BJ (cell line): ENCODE measurements at regions of chr11 and their contacts with region 1.

Region 1: GRCh38 chr11:124673333-124674167 is at the starts of genes SIAE and SPA17:
- DNase-seq: peak; percentile 79
- H3K4me3 ChIP-seq: peak within 1 kb of the TSS; percentile 96
- H3K27me3 ChIP-seq: no peaks in the 10 kb centered on the region; the same call in 1 of the 2 replicates
- CTCF ChIP-seq: no peak
- polyA plus RNA-seq, gene SIAE: 42.1 and 43.8 TPM in 2 replicates
- polyA plus RNA-seq, gene SPA17: 2.9 and 12.1 TPM in 2 replicates

Region 2: GRCh38 chr11:124509982-124510678 is 163.4 kb before region 1 on chr11:
- CTCF ChIA-PET with region 1: no interaction called
- POLR2A ChIA-PET with region 1: no interaction called
- DNase-seq: no peak
- H3K4me3 ChIP-seq: no peak overlapping the region
- H3K27me3 ChIP-seq: no peaks in the 10 kb centered on the region
- CTCF ChIP-seq: no peak

Region 3: GRCh38 chr11:124570160-124570559 is 103.4 kb before region 1 on chr11:
- CTCF ChIA-PET with region 1: no interaction called
- POLR2A ChIA-PET with region 1: no interaction called
- DNase-seq: no peak
- H3K4me3 ChIP-seq: no peak overlapping the region
- H3K27me3 ChIP-seq: no peaks in the 10 kb centered on the region
- CTCF ChIP-seq: no peak

Region 4: GRCh38 chr11:124707829-124708228 is 34.3 kb after region 1 on chr11:
- CTCF ChIA-PET with region 1: no interaction called
- POLR2A ChIA-PET with region 1: no interaction called
- DNase-seq: no peak
- H3K4me3 ChIP-seq: no peak overlapping the region
- H3K27me3 ChIP-seq: peaks cover 5% of the 10 kb centered on the region
- CTCF ChIP-seq: no peak

Region 5: DNA sequence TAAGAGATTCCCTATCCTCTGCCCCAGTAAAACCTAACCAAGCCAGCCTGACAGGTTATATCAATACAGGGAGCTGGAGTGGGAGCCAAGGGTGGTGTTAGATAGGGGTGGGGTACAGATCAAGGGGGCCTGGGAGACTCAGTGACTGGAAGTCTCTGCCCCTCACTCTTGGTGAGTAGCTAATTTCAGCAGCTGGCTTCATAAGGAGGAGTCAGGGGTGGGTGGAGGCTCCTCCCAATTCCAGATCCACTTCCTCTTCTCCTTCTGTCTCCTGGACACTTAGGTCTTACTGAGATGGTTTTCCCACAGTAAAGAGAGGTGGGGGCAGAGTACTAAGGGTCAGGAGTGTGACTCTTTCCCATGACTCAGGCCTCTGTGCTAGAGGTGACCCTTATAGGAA is 79.7 kb after region 1 on chr11:
- CTCF ChIA-PET with region 1: interaction called, 11 read pairs
- POLR2A ChIA-PET with region 1: no interaction called
- DNase-seq: no peak
- H3K4me3 ChIP-seq: no peak overlapping the region
- H3K27me3 ChIP-seq: peaks cover 23% of the 10 kb centered on the region
- CTCF ChIP-seq: no peak

Region 6: GRCh38 chr11:124800226-124800929 is 126.8 kb after region 1 on chr11 and contains the start of gene MSANTD2:
- CTCF ChIA-PET with region 1: interaction called, 41 read pairs
- POLR2A ChIA-PET with region 1: interaction called, 4 read pairs
- DNase-seq: no peak
- H3K4me3 ChIP-seq: peak within 1 kb of the TSS; percentile 89
- H3K27me3 ChIP-seq: no peaks in the 10 kb centered on the region
- CTCF ChIP-seq: no peak
- polyA plus RNA-seq, gene MSANTD2: 3.4 and 5.7 TPM in 2 replicates

Region 7: GRCh38 chr11:125517116-125517804 is 843.7 kb after region 1 on chr11:
- CTCF ChIA-PET with region 1: no interaction called
- POLR2A ChIA-PET with region 1: no interaction called
- DNase-seq: no peak
- H3K4me3 ChIP-seq: no peak overlapping the region
- H3K27me3 ChIP-seq: no peaks in the 10 kb centered on the region; the same call in 1 of the 2 replicates
- CTCF ChIP-seq: no peak